ENCODE measurements at regions of chr3 and their contacts with region 1.

Region 1: GRCh38 chr3:177777699-177778098 is 580.4 kb upstream of the TBL1XR1 start:
- DNase-seq: peak; percentile 41
- H3K4me3 ChIP-seq: no peak overlapping the region
- H3K27ac ChIP-seq: no peak overlapping the region
- H3K4me1 ChIP-seq: peaks cover 13% of the 10 kb centered on the region
- H3K27me3 ChIP-seq: no peaks in the 10 kb centered on the region
- CTCF ChIP-seq: peak; percentile 52 to 57
- POLR2A ChIP-seq: no peak

Region 2: GRCh38 chr3:176872771-176873209 is 904.9 kb before region 1 on chr3:
- CTCF ChIA-PET with region 1: interaction called, 3 read pairs
- POLR2A ChIA-PET with region 1: no interaction called
- dilution Hi-C with region 1: no loop called
- intact Hi-C with region 1: loop called (anchors 5 kb)
- DNase-seq: peak; percentile 61
- H3K4me3 ChIP-seq: no peak overlapping the region
- H3K27ac ChIP-seq: no peak overlapping the region
- H3K4me1 ChIP-seq: no peaks in the 10 kb centered on the region
- H3K27me3 ChIP-seq: no peaks in the 10 kb centered on the region
- CTCF ChIP-seq: peak; percentile 79 to 81
- POLR2A ChIP-seq: no peak

Region 3: DNA sequence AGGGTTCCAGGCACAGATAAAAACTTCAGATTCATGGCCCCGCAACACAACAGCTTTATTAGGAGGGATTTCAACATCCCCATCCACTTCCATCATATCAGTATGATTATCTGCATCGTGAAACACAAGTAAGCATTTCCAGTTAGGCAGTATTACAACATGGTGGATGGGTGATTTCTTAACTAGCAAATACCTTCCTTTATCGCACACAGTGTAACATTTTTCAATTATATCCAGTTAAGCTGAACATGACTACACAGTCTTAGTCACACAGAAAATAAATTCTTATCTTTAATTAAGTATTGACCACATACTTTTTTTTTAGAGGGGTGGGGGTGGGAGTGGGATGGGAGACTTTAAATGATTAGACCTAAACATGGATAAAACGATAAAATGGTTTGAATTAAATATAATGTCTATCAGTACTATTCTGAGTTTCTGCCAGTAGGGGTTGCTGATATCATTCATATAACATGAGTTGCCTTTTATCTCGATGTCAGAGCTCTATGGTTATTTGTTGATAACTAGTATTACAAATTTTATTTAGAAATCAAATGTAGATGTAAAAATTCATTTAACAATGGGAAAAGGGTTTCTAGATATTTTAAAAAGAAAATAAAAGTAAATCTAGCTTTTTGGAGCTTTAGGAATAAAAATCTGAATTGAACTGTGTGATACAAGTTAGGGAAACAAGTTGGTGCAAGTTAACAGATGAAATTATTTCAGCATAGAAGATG is 727.0 kb before region 1 on chr3:
- CTCF ChIA-PET with region 1: interaction called, 24 read pairs
- POLR2A ChIA-PET with region 1: no interaction called
- dilution Hi-C with region 1: no loop called
- intact Hi-C with region 1: loop called (anchors 1 kb)
- DNase-seq: peak; percentile 71
- H3K4me3 ChIP-seq: no peak overlapping the region
- H3K27ac ChIP-seq: no peak overlapping the region
- H3K4me1 ChIP-seq: no peaks in the 10 kb centered on the region
- H3K27me3 ChIP-seq: no peaks in the 10 kb centered on the region
- CTCF ChIP-seq: no peak
- POLR2A ChIP-seq: no peak

Region 4: GRCh38 chr3:177603148-177603603 is 174.5 kb before region 1 on chr3:
- CTCF ChIA-PET with region 1: no interaction called
- POLR2A ChIA-PET with region 1: no interaction called
- dilution Hi-C with region 1: no loop called
- intact Hi-C with region 1: loop called (anchors 5 kb)
- DNase-seq: peak; percentile 34
- H3K4me3 ChIP-seq: no peak overlapping the region
- H3K27ac ChIP-seq: no peak overlapping the region
- H3K4me1 ChIP-seq: peaks cover 13% of the 10 kb centered on the region
- H3K27me3 ChIP-seq: no peaks in the 10 kb centered on the region
- CTCF ChIP-seq: no peak
- POLR2A ChIP-seq: no peak

Region 5: GRCh38 chr3:177679568-177680441 is 97.9 kb before region 1 on chr3:
- CTCF ChIA-PET with region 1: no interaction called
- POLR2A ChIA-PET with region 1: no interaction called
- dilution Hi-C with region 1: no loop called
- intact Hi-C with region 1: loop called (anchors 5 kb)
- DNase-seq: peak; percentile 76
- H3K4me3 ChIP-seq: no peak overlapping the region
- H3K27ac ChIP-seq: peak overlapping the region; percentile 72
- H3K4me1 ChIP-seq: peaks cover 45% of the 10 kb centered on the region
- H3K27me3 ChIP-seq: no peaks in the 10 kb centered on the region
- CTCF ChIP-seq: no peak
- POLR2A ChIP-seq: no peak